Mammary epithelial cell (primary cell): ENCODE measurements at regions of chr3 and their contacts with region 1.

Region 1: GRCh38 chr3:185929192-185930151 is 8.3 kb downstream of the TRA2B start:
- DNase-seq: peak; percentile 52
- H3K4me3 ChIP-seq: peak overlapping the region in 2 of 3 experiments; percentile 1 to 11
- H3K27ac ChIP-seq: peak overlapping the region; percentile 11
- H3K4me1 ChIP-seq: peaks cover 59% of the 10 kb centered on the region
- H3K27me3 ChIP-seq: no peaks in the 10 kb centered on the region
- CTCF ChIP-seq: no peak

Region 2: DNA sequence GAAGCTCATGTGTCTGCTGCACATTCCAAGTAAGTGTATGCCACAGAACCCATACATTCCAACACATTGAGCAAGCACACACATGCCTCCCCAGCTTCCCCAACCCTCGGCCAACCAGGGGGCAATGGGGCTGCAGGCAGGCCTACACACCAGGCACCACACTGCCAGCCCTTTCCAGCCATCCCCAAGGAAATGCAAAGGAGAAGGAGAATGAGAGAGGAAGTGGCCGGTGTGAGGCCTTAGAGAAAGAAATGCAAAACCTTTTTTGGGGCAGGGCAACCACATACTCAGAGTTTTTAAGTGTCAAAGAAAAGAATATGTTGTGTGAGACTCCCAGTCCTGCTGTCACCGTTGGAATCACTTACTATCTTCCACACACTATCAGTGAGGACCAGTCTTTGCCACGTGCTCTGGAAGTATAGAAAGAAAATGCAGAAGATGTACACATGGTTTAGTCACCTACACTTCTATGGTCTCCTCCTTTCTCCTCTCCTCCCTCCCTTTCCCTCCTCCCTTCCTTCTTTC is 115.7 kb before region 1 on chr3:
- CTCF ChIA-PET with region 1: no interaction called
- dilution Hi-C with region 1: no loop called
- in situ Hi-C with region 1: loop called in 1 of 2 experiments (anchors 10 kb)
- intact Hi-C with region 1: no loop called
- DNase-seq: peak; percentile 58
- H3K4me3 ChIP-seq: no peak overlapping the region
- H3K27ac ChIP-seq: peak overlapping the region; percentile 47
- H3K4me1 ChIP-seq: peaks cover 38% of the 10 kb centered on the region
- H3K27me3 ChIP-seq: no peaks in the 10 kb centered on the region
- CTCF ChIP-seq: no peak